Activated T-helper 2 cell treated with anti-CD3 and anti-CD28 coated beads, Interferon-gamma antibody, Interleukin-2, Interleukin-4, amounts not matched to agents 10 μg/mL and 5 μg/mL and 100 μg/mL, durations not matched to agents 14 hours and 24 hours and 36 hours (primary cell): ENCODE measurements at regions of chr10 and their contacts with region 1.

Region 1: DNA sequence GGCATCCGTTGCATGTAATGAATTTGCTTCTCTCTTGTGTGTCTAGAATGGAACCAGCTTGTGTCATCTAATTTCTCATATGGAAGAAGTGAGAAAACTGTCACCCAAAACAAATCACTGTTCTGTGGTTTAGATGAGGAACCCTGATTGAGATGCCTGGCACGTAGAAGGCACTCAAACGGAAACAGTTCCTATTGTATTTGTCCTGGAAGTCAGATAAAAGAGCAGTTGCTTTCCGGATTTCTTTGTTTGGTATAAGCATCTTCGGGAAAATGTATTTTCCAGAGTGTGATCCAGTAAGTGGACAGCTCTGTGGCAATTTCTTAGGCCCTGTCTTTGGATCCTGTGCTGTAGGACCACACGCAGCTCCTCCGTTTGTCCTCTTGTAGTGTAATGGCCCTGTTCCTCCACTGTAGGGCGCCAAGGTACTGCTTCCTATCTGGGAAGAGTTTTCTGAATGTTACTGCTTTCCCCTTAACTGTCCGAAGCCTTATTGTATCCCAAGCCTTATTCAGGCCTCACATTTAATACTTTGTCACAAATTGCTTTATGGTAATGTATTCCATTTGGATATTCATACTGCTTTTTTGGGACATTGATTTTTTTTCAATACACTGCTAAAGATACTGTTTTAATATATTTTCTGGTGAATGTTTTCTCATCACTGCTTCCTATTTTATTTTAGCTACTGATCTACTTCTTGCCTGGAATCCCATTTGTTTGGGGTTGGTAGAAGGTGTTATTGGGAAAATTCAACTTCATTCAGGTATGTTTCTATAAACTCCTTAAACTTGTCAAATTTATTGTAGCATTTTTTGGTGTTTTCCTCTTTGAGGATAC is 24.8 kb downstream of the INPP5F start:
- DNase-seq: peak; percentile 28
- H3K4me3 Mint-ChIP-seq: no peak overlapping the region
- H3K27ac Mint-ChIP-seq: no peak overlapping the region
- H3K4me1 Mint-ChIP-seq: peaks cover 7% of the 10 kb centered on the region
- H3K27me3 Mint-ChIP-seq: no peaks in the 10 kb centered on the region

Region 2: GRCh38 chr10:119834188-119834587 is 83.6 kb after region 1 on chr10:
- intact Hi-C with region 1: loop called (anchors 1 kb)
- DNase-seq: no peak
- H3K4me3 Mint-ChIP-seq: no peak overlapping the region
- H3K27ac Mint-ChIP-seq: peak overlapping the region; percentile 47
- H3K4me1 Mint-ChIP-seq: peaks cover 19% of the 10 kb centered on the region
- H3K27me3 Mint-ChIP-seq: no peaks in the 10 kb centered on the region

Region 3: DNA sequence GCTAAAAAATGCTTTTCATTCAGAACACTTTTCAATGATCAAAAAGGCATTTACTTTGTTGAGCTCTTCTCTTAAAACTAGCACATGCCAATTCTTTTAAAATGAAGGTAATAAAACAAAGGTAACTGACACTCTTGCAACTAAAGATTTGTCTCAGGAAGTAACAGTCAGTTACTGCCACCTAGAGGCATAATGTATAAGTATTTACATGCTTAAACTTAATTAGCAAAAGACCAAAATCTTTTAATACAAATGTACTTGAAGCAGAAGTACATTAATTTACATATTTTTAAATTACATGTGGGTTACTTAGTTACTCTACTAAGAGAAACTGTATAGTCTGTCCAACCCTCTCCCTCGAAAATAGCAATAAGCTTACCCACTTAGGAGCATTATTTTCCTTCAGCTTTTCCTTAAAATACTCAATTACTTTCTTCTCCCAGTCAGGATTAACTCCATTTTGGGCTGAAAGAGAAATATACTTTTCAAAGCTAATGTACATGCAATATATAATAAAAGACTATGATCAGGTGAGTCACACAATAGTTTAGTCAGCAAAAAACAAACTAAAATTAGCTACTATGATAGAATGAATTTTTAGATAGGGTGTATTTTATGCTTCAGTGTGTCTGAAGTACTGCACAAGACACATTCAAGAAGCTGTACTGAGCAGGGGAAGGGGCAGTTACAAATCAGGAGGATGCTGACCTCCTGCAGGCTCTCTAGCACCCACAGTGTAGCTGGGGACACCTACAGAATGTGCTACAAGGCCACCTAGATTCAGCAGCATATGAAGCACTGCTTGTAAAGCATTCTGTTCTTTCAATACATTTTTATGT is 109.0 kb after region 1 on chr10:
- intact Hi-C with region 1: loop called (anchors 1 kb)
- DNase-seq: no peak
- H3K4me3 Mint-ChIP-seq: no peak overlapping the region
- H3K27ac Mint-ChIP-seq: no peak overlapping the region
- H3K4me1 Mint-ChIP-seq: peaks cover 30% of the 10 kb centered on the region
- H3K27me3 Mint-ChIP-seq: no peaks in the 10 kb centered on the region

Region 4: GRCh38 chr10:120336911-120337540 is 586.4 kb after region 1 on chr10:
- intact Hi-C with region 1: loop called (anchors 10 kb)
- DNase-seq: peak; percentile 15
- H3K4me3 Mint-ChIP-seq: no peak overlapping the region
- H3K27ac Mint-ChIP-seq: no peak overlapping the region
- H3K4me1 Mint-ChIP-seq: no peaks in the 10 kb centered on the region
- H3K27me3 Mint-ChIP-seq: no peaks in the 10 kb centered on the region